Sciatic nerve (tissue), 2 donors: ENCODE measurements at regions of chr1 and their contacts with region 1.

Region 1: GRCh38 chr1:17405898-17406759 is 33.3 kb downstream of the RCC2 start:
- DNase-seq: peak; percentile 75
- ATAC-seq: peak; percentile 89

Region 2: GRCh38 chr1:17135530-17135929 is 270.6 kb before region 1 on chr1:
- intact Hi-C with region 1: loop called (anchors 10 kb)
- DNase-seq: no peak
- ATAC-seq: no peak

Region 3: DNA sequence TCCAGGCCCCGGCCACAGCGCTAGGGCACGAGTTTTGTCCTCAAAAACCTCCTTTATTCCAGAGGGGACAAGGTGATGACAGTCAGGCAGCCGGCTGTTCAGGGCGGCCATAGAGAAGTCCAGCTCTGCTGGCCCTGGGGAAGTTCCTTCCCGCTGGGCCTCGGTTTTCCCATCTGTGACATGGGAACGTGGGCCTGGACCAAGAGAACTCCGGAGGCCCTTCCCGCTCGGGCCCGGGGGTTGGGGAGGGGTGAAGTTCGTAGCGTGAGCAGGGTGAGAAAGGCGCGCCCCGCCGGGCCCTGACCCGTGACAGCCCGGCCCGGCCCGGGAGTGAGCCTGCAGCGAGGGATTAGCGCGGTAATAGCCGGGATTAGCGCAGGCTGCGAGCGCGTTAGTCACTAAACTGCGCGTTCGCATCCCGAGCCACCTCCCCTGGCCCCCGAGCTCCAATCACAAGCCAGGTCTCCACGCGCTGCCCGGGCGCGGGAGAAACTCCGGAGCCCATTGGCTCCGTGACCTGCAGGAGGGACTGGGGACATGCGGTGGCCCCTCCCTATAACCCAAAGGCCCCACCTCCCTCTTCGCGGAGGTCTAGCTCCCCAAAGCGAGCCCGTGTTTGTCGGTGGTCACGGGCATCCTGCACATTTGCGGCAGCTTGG is 257.1 kb before region 1 on chr1:
- intact Hi-C with region 1: no loop called
- DNase-seq: no peak
- ATAC-seq: no peak

Region 4: DNA sequence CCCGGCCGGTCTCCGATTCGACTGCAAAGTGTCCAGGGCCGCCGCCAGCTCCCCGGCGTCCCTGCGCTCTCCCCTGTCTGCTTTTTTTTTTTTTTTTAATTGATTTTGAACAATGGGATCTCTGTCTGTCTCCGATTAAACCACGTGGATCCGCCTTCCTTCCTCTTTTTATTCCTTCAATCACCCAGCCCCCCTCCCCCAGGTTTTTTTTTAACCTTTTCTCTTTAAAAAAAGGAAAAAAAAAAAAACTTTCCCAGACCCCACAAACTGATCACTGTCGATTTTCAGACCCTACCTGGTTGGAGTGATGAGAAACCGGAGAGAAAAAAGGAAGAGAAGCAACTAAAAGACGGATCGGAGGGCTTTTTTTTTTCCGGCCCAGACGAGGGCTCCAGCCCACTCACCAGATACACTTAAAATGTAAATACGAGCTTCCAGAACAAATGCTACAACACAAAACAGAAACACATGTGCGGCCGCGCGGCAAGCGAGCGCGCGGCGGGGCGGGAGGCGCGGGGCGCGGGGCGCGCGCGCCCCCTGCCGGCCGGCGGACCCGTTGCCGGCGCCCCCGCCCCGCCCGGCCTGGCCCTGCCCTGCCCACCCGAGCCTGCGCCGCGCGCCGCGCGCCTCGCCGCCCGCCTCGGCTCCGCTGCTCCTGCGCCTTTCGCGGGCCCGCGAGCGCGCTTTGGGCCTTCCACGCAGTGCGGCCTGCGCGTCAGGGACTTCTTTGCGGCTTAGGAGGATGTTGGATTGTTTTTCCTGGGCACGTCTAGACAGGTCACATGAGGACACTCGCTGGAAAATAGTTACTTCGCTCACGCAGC is 33.3 kb after region 1 on chr1 and contains the start of gene RCC2:
- intact Hi-C with region 1: no loop called
- DNase-seq: peak; percentile 78
- ATAC-seq: peak; percentile 65
- total RNA-seq, gene RCC2: 29.6 TPM

Region 5: DNA sequence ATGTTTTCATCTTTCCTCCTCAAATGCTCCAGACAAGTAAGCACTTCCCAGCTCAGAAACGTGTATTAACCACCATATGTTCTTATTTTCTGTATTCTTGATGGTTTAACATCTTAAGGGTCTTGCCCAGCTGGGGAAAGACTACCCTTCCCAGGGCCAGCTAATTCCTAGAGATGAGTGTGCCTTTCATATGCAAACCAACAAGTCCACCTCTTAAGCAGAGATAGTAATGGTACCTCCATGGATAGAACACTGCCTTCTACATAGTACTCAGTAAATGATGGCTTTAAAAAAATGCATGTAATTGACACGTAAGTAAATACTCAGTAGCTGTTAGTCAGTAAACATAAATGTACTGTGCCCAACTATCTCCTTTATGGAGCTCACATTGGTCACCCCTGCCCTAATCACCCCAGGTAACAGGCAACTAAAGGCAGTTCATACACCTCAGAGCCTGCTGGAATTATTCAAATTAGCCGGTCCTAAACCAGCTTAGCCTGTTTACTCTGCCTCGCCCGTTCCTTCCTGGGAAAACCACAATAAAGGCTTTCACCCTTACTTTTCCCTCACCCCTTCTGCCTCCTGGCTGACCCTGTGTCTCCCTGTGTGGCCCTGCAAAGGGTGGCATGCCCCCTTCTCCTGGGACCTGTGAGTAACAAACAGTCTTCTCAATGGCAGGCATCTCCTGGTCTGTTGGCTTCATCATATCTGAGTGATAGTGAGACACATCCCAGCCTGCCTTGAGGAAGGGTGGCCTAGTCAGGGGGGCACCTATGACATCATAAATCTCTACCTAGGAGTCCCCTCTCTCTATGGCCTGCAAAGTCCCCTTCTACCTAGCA is 1034.5 kb after region 1 on chr1:
- intact Hi-C with region 1: no loop called
- DNase-seq: no peak
- ATAC-seq: no peak